A673 (cell line): ENCODE measurements at regions of chr22 and their contacts with region 1.

Region 1: DNA sequence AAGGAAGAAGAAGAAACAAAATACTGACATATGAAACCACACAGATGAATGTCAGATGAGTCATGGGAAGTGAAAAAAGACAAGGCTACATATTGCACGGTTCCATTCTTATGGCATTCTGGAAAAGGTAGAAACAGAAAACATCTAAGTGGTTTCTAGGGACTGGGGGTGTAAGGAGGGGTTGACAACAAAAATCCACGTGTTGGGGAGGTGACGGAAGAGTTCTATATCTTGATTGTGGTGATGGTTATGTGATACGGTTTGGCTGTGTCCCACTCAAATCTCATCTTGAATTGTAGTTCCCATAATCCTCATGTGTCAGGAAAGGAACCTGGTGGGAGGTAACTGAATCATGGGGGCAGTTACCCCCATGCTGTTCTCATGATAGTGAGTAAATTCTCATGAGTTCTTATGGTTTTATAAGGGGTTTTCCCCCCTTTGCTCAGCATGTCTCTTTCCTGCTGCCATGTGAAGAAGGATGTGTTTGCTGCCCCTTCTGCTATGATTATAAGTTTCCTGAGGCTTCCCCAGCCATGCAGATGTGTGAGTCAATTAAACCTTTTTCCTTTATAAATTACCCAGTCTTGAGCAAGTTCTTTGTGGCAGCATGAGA is 6.4 kb upstream of the ARFGAP3 start:
- DNase-seq: peak; percentile 87
- H3K4me3 ChIP-seq: no peak overlapping the region
- H3K27ac ChIP-seq: no peak overlapping the region
- H3K4me1 ChIP-seq: peaks cover 15% of the 10 kb centered on the region
- H3K27me3 ChIP-seq: no peaks in the 10 kb centered on the region
- CTCF ChIP-seq: no peak

Region 2: DNA sequence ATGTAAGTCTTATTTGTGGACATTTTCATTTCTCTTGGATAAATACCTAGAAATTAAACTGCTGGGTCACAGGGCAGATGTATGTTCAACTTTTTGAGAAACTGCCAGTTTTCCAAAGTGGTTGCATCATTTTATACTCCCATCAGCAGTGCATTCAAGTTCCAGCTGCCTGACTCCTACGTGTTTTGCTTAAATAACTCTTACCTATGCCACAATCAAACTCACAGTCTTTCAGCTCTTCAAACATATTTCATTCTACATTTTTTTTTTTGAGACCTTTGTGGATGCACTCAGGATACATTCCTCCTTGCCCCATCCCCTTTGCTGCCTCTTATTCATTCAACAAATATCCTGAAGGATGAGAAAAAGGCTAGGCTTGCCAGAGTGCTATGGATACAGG is 602.2 kb before region 1 on chr22:
- CTCF ChIA-PET with region 1: no interaction called
- POLR2A ChIA-PET with region 1: no interaction called
- intact Hi-C with region 1: no loop called
- DNase-seq: no peak
- H3K4me3 ChIP-seq: no peak overlapping the region
- H3K27ac ChIP-seq: no peak overlapping the region
- H3K4me1 ChIP-seq: peaks cover 33% of the 10 kb centered on the region
- H3K27me3 ChIP-seq: no peaks in the 10 kb centered on the region
- CTCF ChIP-seq: no peak

Region 3: DNA sequence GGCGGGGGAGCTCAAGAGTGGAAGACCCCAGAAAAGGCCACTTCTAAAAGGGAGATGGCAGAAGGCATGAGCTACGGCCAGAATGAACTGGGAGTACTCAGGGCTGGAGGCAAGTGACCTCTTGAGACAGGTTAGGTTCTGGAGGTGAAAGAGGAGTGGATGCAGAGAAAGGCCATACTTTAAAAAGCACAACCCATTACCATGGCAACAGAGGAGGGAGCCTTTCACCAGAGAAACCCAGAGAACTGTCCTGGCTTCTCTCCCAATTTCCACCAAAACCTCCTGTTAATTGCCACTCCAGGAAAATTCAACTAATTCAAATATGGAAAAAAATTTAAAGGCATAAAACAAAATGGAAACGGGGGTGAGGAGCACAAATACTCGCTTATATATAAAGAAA is 158.6 kb before region 1 on chr22:
- CTCF ChIA-PET with region 1: no interaction called
- POLR2A ChIA-PET with region 1: no interaction called
- intact Hi-C with region 1: loop called (anchors 5 kb)
- DNase-seq: no peak
- H3K4me3 ChIP-seq: no peak overlapping the region
- H3K27ac ChIP-seq: peak overlapping the region; percentile 37
- H3K4me1 ChIP-seq: peaks cover 8% of the 10 kb centered on the region
- H3K27me3 ChIP-seq: no peaks in the 10 kb centered on the region
- CTCF ChIP-seq: no peak

Region 4: GRCh38 chr22:42743501-42743991 is 119.9 kb before region 1 on chr22:
- CTCF ChIA-PET with region 1: no interaction called
- POLR2A ChIA-PET with region 1: interaction called, 10 read pairs
- intact Hi-C with region 1: no loop called
- DNase-seq: peak; percentile 46
- H3K4me3 ChIP-seq: no peak overlapping the region
- H3K27ac ChIP-seq: peak overlapping the region; percentile 65
- H3K4me1 ChIP-seq: peaks cover 6% of the 10 kb centered on the region
- H3K27me3 ChIP-seq: no peaks in the 10 kb centered on the region
- CTCF ChIP-seq: no peak

Region 5: GRCh38 chr22:42848941-42849550 is 14.4 kb before region 1 on chr22:
- CTCF ChIA-PET with region 1: no interaction called
- POLR2A ChIA-PET with region 1: no interaction called
- intact Hi-C with region 1: no loop called
- DNase-seq: no peak
- H3K4me3 ChIP-seq: no peak overlapping the region
- H3K27ac ChIP-seq: no peak overlapping the region
- H3K4me1 ChIP-seq: no peaks in the 10 kb centered on the region
- H3K27me3 ChIP-seq: no peaks in the 10 kb centered on the region
- CTCF ChIP-seq: no peak

Region 6: DNA sequence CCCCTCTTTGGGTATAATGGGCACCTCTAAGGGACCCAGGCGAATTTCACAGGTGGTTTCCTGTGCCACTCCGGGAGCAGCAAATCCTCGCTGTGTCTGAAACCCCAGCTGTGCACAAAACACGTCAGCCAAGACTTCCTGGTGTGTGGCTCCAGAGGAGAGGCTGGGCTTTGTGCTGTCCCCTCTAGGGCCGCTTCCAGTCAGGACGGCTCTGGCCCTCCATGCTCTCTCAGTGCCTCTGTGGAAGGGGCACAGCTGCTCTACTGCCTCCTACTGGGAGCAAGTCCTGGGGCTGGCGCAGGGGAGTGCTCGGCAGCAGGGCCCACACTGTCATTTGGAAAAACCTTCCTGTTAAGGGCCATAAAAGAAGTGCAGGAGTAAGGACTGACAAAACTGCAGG is 17.4 kb after region 1 on chr22:
- CTCF ChIA-PET with region 1: no interaction called
- POLR2A ChIA-PET with region 1: no interaction called
- intact Hi-C with region 1: no loop called
- DNase-seq: peak; percentile 36
- H3K4me3 ChIP-seq: no peak overlapping the region
- H3K27ac ChIP-seq: no peak overlapping the region
- H3K4me1 ChIP-seq: no peaks in the 10 kb centered on the region
- H3K27me3 ChIP-seq: no peaks in the 10 kb centered on the region
- CTCF ChIP-seq: peak; percentile 46

Region 7: GRCh38 chr22:43036282-43036829 is 172.9 kb after region 1 on chr22:
- CTCF ChIA-PET with region 1: interaction called, 5 read pairs
- POLR2A ChIA-PET with region 1: no interaction called
- intact Hi-C with region 1: loop called (anchors 10 kb)
- DNase-seq: no peak
- H3K4me3 ChIP-seq: no peak overlapping the region
- H3K27ac ChIP-seq: no peak overlapping the region
- H3K4me1 ChIP-seq: no peaks in the 10 kb centered on the region
- H3K27me3 ChIP-seq: no peaks in the 10 kb centered on the region
- CTCF ChIP-seq: no peak